ENCODE measurements at regions of chr10 and their contacts with region 1.

Region 1: GRCh38 chr10:97736902-97737769 is at the start of gene ZFYVE27:
- DNase-seq: peak; percentile 98
- H3K4me3 ChIP-seq: peak within 1 kb of the TSS; percentile 70 to 95 (median 88)
- H3K27ac ChIP-seq: peak within 1 kb of the TSS; percentile 92 to 98 (median 95)
- H3K4me1 ChIP-seq: peaks cover 8 to 24% (median 13%) of the 10 kb centered on the region in 4 donors
- H3K27me3 ChIP-seq: no peaks in the 10 kb centered on the region
- CTCF ChIP-seq: no peak
- EP300 ChIP-seq: no peak
- POLR2A ChIP-seq: peak; percentile 97
- total RNA-seq, gene ZFYVE27: 46.4 to 102 (median 63.9) TPM

Region 2: DNA sequence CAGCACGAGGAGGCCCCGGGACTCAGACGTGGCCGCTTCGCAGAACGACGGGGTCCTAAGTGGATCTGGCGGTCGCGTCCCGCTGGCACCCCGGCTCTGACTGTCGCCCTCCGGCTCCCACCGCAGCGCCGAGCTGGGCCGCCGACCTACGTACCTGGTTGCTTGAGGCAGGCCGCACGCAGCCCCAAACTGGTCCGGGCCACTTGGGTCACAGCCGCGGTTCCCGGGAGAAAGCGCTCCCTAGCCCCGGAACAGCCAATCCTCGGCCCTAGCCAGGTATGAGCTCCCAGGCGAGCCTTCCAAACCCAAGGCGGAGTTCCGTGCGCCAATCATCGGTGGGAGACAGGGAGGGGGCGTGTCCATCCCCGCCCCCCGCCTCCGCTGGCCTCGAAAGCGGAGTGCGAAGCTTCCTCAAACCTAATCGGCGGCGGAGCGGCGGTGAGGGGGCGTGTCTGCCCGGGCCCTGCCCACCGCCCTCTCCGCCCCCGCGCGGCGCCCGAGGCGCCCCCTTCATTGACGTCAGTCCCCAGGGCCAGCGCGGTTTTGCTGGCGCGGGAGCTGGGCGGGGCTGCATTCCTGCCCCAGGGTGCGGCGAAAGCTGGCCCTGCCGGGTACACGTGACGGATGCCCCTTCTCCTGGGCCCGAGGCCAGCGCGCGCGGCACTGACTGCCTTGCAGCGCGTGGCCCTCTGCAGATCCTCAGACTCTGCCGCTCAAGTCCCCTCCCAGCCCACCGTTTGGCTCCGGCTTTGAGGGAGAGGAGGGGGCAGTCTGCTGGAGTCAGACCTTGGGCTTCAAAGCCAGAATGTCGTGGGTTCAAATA is 50.0 kb before region 1 on chr10 and contains the start of gene AVPI1:
- in situ Hi-C with region 1: loop called in 1 of 4 experiments (anchors 10 kb)
- intact Hi-C with region 1: no loop called
- DNase-seq: peak; percentile 99
- H3K4me3 ChIP-seq: peak within 1 kb of the TSS; percentile 51 to 65 (median 60)
- H3K27ac ChIP-seq: peak within 1 kb of the TSS; percentile 90 to 93 (median 92)
- H3K4me1 ChIP-seq: peaks cover 17 to 61% (median 50%) of the 10 kb centered on the region in 4 donors
- H3K27me3 ChIP-seq: no peaks in the 10 kb centered on the region
- CTCF ChIP-seq: no peak
- EP300 ChIP-seq: peak; percentile 94
- POLR2A ChIP-seq: peak; percentile 99
- total RNA-seq, gene AVPI1: 24.3 to 79.3 (median 47.9) TPM

Measured in transverse colon (tissue), 4 donors.